ENCODE measurements at regions of chr20 and their contacts with region 1.

Region 1: DNA sequence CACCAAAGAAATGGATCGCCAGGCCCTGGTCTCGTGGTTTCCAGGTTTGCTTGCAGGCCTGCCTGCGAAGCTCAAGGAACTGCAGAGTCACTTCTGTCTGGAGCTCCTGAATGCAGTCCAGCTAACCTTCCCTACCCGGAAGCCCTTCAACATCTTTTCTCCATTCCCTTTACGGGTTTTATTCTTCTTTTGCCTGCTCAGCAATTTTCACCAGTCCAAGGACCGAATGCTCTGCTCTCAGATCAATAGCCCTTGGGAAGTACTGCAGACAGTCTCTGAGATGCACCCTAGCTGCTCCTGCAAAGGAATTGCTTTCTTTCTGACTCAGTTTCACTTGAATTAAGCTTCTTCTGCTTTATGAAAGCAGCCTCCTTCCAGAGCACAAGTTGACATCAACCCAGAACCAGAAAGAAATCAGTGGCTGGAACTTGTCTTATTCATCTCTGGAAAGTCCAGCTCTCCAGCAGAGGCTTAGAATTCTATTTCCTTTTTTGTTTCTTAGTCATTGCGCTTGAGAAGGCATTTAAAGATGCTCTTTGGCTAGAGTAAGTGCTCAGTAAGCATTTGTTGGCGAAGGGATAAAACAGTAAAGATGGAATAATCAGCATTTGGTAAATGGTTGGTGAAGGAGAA is 18.7 kb upstream of the YWHAB start:
- DNase-seq: no peak
- H3K4me3 ChIP-seq: no peak overlapping the region
- CTCF ChIP-seq: no peak

Region 2: DNA sequence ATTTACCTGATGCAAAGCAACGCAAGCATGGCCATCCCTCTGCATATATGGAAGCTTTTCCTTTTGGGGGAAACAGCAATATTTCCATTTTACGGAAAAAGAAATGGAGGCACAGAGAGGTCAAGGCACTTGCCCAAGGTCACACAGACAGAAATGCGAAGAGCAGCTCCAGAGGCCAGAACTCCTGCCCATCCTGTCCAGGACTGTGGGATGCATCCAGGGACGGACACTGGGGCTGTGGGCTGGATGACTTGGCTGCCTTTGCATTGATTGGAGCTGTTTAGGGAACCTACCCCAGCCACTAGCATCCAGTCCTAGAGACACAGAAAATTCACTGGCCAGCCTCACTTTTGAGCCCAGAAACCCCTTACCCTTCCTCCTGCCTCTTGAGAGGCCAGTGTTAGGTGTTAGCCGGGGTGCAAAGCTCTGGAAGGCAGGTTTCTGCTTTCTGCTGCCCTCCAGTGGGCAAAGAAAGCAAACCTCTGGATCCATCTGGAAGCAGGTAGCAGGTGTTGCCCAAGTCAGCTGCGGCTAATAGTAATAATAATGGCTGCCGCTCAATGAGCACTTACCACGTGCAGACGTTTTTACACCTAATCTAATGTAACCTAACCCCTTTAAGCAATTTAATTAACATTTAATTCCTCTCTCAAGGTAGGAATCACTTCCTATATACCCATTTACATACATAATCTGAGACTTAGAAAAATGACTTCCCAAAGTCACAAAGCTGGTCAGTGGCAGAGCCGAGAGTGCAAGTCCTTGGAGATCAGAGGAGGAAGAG is 183.4 kb before region 1 on chr20:
- in situ Hi-C with region 1: loop called (anchors 5 kb)
- DNase-seq: no peak
- H3K4me3 ChIP-seq: no peak overlapping the region
- CTCF ChIP-seq: peak; percentile 62

Region 3: DNA sequence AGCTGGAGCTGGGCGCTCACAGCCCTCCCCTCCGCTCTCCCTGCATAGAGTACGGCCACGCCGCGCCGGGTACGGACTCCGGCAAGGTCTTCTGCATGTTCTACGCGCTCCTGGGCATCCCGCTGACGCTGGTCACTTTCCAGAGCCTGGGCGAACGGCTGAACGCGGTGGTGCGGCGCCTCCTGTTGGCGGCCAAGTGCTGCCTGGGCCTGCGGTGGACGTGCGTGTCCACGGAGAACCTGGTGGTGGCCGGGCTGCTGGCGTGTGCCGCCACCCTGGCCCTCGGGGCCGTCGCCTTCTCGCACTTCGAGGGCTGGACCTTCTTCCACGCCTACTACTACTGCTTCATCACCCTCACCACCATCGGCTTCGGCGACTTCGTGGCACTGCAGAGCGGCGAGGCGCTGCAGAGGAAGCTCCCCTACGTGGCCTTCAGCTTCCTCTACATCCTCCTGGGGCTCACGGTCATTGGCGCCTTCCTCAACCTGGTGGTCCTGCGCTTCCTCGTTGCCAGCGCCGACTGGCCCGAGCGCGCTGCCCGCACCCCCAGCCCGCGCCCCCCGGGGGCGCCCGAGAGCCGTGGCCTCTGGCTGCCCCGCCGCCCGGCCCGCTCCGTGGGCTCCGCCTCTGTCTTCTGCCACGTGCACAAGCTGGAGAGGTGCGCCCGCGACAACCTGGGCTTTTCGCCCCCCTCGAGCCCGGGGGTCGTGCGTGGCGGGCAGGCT is 116.6 kb before region 1 on chr20:
- in situ Hi-C with region 1: loop called (anchors 5 kb)
- DNase-seq: no peak
- H3K4me3 ChIP-seq: no peak overlapping the region
- CTCF ChIP-seq: no peak

Measured in astrocyte of the cerebellum (primary cell).